Gastrocnemius medialis (tissue), 4 donors: ENCODE measurements at regions of chr6 and their contacts with region 1.

Region 1: DNA sequence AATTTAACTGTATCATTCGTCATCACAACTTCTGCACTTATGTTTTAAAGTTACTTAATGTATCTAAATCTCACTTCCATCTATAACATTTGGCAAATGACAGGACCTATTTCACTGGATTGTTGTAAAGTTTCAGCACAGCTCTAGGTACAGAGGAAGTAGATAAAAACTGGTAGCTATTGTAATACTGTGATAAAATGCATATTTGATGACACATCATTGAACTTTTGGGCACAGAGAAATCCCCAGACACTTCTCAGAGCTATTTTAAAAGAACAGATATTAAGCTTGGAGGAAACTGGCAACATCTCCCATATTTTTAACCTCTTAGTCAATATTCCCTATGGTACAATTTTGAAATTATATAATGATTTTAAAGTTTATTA is 138.7 kb downstream of the RFPL4B start:
- DNase-seq: no peak
- ATAC-seq: no peak
- H3K4me3 ChIP-seq: no peak overlapping the region
- H3K27ac ChIP-seq: no peak overlapping the region
- H3K4me1 ChIP-seq: no peaks in the 10 kb centered on the region
- H3K27me3 ChIP-seq: no peaks in the 10 kb centered on the region
- CTCF ChIP-seq: no peak
- POLR2A ChIP-seq: no peak

Region 2: DNA sequence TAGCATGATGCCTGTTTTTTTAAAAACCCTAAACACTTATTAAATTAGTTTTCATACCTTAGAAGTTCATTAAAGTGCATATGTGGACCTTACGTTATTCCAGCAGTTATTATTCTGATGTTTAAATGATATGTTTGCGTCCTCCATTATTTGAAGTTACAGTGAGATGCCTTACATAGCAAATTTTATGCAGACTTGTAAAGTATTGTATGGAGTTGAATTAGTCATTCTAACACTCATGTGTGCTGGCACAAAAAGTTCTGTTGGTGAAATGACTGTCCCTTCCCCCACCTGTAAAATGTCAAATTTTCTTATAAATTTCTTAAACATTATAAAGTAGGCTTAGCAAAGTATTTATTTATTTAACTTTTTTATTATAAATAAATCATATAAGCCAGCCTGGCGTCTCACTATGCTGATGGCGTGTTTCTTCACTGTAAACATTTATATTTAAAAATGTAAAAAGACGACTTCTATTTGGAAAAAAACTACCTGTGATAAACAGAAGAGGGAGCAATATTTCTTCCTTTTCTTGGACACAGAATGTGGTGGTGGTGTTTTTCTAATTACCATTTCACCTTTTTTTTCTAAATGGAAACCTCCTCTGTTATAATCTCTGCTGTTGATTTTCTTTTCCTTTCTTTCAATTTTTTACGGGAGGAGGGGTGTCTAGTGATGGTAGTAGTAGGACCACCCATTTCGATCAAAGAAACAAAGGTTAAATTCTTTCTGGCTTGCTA is 16.7 kb after region 1 on chr6:
- in situ Hi-C with region 1: no loop called
- intact Hi-C with region 1: loop called (anchors 1 kb)
- DNase-seq: no peak
- ATAC-seq: no peak
- H3K4me3 ChIP-seq: no peak overlapping the region
- H3K27ac ChIP-seq: no peak overlapping the region
- H3K4me1 ChIP-seq: peaks cover 0 to 4% of the 10 kb centered on the region in 2 donors
- H3K27me3 ChIP-seq: no peaks in the 10 kb centered on the region
- CTCF ChIP-seq: no peak
- POLR2A ChIP-seq: no peak